ENCODE measurements at regions of chr19 and their contacts with region 1.

Region 1: GRCh38 chr19:7852851-7853769 is 21.1 kb downstream of the PRR36 start:
- DNase-seq: peak; percentile 70
- H3K4me3 Mint-ChIP-seq: no peak overlapping the region
- H3K27ac Mint-ChIP-seq: no peak overlapping the region
- H3K4me1 Mint-ChIP-seq: peaks cover 5% of the 10 kb centered on the region
- H3K27me3 Mint-ChIP-seq: no peaks in the 10 kb centered on the region

Region 2: DNA sequence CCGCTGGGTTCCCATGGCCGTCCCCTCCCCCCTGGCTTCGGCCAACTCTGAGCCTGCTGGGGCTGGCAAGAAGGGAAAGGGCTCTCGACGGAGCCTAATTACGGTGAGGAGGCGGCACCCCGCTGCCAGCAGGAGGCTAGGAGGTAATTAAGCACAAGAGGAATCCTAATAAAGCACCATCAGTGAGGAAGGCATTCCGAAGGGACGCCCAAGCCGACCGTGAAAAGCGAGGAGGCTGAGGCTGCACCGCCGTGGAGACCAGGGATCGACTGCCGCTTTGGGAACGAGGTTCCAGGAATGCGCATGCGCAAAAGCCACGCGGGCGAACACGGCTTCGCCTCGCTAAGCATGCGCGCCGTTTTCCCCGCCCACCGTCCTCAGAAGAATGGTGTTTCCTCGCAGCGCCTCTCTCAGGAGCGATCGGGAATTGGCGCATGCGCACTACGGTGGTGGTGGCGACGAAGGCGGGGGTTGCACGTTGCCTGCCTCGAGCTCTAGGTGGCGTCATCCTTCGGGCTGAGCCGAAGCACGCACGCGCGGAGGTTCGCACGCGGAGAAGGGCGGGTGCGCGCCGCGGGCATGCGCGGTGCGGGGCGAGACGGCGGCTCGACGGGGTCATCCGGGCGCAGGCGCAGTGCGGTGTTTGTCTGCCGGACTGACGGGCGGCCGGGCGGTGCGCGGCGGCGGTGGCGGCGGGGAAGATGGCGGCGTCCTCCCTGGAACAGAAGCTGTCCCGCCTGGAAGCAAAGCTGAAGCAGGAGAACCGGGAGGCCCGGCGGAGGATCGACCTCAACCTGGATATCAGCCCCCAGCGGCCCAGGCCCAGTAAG is 50.3 kb after region 1 on chr19 and contains the start of gene MAP2K7:
- CTCF ChIA-PET with region 1: interaction called, 8 read pairs
- intact Hi-C with region 1: loop called (anchors 1 kb)
- DNase-seq: peak; percentile 100
- H3K4me3 Mint-ChIP-seq: peak within 1 kb of the TSS; percentile 88
- H3K27ac Mint-ChIP-seq: peak within 1 kb of the TSS; percentile 84
- H3K4me1 Mint-ChIP-seq: peaks cover 24% of the 10 kb centered on the region
- H3K27me3 Mint-ChIP-seq: no peaks in the 10 kb centered on the region
- total RNA-seq, gene MAP2K7: 39.1 to 39.8 TPM

Region 3: DNA sequence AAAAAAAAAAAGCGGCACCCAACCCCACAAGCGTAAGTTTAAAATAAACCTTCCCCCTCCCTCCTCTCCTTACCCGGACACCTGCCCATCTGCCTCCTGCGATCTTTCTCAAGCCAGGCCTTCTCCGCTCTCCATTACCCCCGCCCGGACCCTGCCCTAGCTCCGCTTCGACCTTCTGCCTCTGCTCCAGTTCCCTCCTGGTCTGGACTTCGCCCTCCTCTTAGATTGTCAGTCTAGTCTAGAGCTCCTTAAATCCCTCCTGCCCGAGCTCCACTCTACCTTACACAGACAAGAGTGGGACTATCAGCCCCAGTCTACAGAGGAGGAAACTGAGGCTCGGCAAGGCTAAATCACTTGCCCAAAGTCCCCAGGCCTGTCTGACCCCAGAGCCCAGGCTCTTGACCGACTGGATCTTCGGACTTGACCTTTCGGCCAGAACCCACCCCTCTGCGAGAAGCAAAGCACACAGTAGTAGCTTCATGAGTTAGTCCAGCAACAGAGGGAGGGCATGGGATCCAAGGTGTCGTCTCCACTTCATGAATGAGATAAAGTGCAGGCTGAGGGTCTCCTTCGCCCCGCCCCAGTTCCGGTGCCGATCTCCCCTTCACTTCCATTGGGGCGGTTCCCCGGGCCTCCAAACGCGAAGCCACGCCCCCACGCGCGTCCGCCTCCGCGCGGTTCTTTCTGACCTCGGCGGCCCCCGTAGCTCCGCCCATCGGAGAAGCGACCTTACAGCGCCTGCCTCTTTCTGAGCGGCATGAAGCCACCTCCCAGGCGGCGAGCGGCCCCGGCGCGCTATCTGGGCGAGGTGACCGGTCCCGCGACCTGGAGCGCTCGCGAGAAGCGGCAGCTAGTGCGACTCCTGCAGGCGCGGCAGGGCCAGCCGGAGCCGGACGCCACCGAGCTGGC is 66.8 kb after region 1 on chr19 and contains the start of gene SNAPC2:
- CTCF ChIA-PET with region 1: interaction called, 4 read pairs
- intact Hi-C with region 1: loop called (anchors 1 kb)
- DNase-seq: peak; percentile 96
- H3K4me3 Mint-ChIP-seq: peak within 1 kb of the TSS; percentile 81
- H3K27ac Mint-ChIP-seq: peak within 1 kb of the TSS; percentile 73
- H3K4me1 Mint-ChIP-seq: peaks cover 38% of the 10 kb centered on the region
- H3K27me3 Mint-ChIP-seq: peaks cover 25% of the 10 kb centered on the region
- total RNA-seq, gene SNAPC2: 10.9 to 12.4 TPM

Region 4: GRCh38 chr19:7925171-7925851 is 72.2 kb after region 1 on chr19:
- CTCF ChIA-PET with region 1: interaction called, 4 read pairs
- intact Hi-C with region 1: loop called (anchors 1 kb)
- DNase-seq: peak; percentile 76
- H3K4me3 Mint-ChIP-seq: peak overlapping the region; percentile 71
- H3K27ac Mint-ChIP-seq: no peak overlapping the region
- H3K4me1 Mint-ChIP-seq: peaks cover 24% of the 10 kb centered on the region
- H3K27me3 Mint-ChIP-seq: no peaks in the 10 kb centered on the region

Region 5: GRCh38 chr19:7953060-7953459 is 100.0 kb after region 1 on chr19:
- CTCF ChIA-PET with region 1: no interaction called
- intact Hi-C with region 1: no loop called
- DNase-seq: no peak
- H3K4me3 Mint-ChIP-seq: no peak overlapping the region
- H3K27ac Mint-ChIP-seq: no peak overlapping the region
- H3K4me1 Mint-ChIP-seq: no peaks in the 10 kb centered on the region
- H3K27me3 Mint-ChIP-seq: no peaks in the 10 kb centered on the region

Region 6: DNA sequence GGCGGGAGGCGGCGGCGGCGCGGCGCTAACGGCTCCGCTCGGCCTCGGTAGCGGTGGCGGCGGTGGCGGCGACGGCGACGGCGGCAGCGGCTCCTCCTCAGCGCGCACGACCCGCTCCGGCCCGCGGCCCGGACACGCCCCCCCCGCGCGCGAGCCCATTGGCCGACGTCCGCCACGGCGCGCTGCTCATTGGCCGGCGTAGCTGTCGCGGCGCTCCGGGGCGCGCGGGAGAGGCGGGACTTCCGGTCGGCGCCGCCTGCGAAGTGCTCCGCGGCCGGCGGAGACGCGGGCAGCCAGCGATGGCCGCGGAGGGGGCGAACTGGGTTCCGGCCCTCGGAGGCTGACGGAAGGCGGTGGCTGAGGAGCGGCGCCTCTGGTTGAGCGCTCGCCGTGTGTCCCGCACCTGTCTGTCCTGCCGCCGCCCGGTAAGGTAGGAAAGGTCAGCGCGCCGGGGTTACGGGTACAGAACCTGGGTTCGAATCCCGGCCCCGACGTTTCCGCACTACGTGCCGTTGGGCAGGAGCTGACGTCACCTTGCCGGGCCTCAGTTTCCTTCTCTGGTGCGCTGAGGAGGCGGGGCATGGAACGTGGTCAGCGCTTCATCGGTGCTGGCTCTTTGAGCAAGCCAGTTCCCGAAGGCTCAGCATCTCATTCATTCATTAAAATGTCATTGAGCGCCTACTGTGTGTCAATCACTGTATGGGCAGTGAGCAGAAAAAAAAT is 152.6 kb after region 1 on chr19 and contains the start of gene ELAVL1:
- CTCF ChIA-PET with region 1: no interaction called
- intact Hi-C with region 1: no loop called
- DNase-seq: peak; percentile 89
- H3K4me3 Mint-ChIP-seq: peak within 1 kb of the TSS; percentile 94
- H3K27ac Mint-ChIP-seq: peak within 1 kb of the TSS; percentile 78
- H3K4me1 Mint-ChIP-seq: peaks cover 35% of the 10 kb centered on the region
- H3K27me3 Mint-ChIP-seq: no peaks in the 10 kb centered on the region
- total RNA-seq, gene ELAVL1: 135 to 140 TPM

Measured in activated naive CD4-positive, alpha-beta T cell treated with anti-CD3 and anti-CD28 coated beads for 36 hours (primary cell).